CD4-positive, alpha-beta memory T cell (primary cell): ENCODE measurements at regions of chr5 and their contacts with region 1.

Region 1: GRCh38 chr5:138503487-138504270 is 38.4 kb downstream of the EGR1 start:
- DNase-seq: peak; percentile 47 to 57 (median 50)
- H3K4me3 ChIP-seq: no peak overlapping the region
- H3K4me3 Mint-ChIP-seq: no peak overlapping the region
- H3K27ac ChIP-seq: no peak overlapping the region
- H3K27ac Mint-ChIP-seq: peak overlapping the region in 4 of 7 donors; percentile 6 to 83 (median 42)
- H3K4me1 ChIP-seq: no peaks in the 10 kb centered on the region
- H3K4me1 Mint-ChIP-seq: peaks cover 0 to 4% (median 1%) of the 10 kb centered on the region in 4 donors
- H3K27me3 ChIP-seq: no peaks in the 10 kb centered on the region
- H3K27me3 Mint-ChIP-seq: peaks cover 0 to 1% of the 10 kb centered on the region in 2 donors

Region 2: DNA sequence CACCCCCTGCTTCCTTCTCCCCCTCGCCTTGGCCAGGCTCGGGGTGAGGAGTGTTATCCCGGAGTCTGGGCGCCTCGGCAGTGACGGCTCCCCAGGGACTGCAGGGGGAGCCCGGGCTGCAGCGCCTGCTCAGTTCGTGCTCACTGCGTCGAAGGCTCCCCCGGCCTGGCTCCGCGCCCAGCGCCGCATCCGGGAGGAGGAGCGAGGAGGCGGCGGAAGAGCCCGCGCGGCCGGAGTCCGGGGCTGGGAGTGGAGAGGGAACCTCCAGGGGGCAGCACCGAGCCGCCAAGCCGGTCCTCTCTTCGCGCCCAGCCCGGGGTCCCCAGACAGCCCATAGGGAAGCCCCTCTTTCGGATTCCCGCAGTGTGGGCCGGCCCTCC is 39.7 kb before region 1 on chr5:
- CTCF ChIA-PET with region 1: interaction called, 507 read pairs
- POLR2A ChIA-PET with region 1: interaction called, 20 read pairs
- intact Hi-C with region 1: loop called (anchors 1 kb)
- DNase-seq: peak; percentile 91 to 95 (median 94)
- H3K4me3 ChIP-seq: peak overlapping the region; percentile 79 to 85
- H3K4me3 Mint-ChIP-seq: peak overlapping the region; percentile 85 to 97 (median 90)
- H3K27ac ChIP-seq: peak overlapping the region; percentile 90
- H3K27ac Mint-ChIP-seq: peak overlapping the region; percentile 89 to 96 (median 93)
- H3K4me1 ChIP-seq: peaks cover 46% of the 10 kb centered on the region
- H3K4me1 Mint-ChIP-seq: peaks cover 27 to 65% (median 39%) of the 10 kb centered on the region in 4 donors
- H3K27me3 ChIP-seq: no peaks in the 10 kb centered on the region
- H3K27me3 Mint-ChIP-seq: no peaks in the 10 kb centered on the region

Region 3: GRCh38 chr5:138491669-138492559 is 11.8 kb before region 1 on chr5:
- CTCF ChIA-PET with region 1: interaction called, 18 read pairs
- POLR2A ChIA-PET with region 1: interaction called, 4 read pairs
- intact Hi-C with region 1: no loop called
- DNase-seq: peak; percentile 81 to 87 (median 83)
- H3K4me3 ChIP-seq: peak overlapping the region in 1 of 2 donors; percentile 60
- H3K4me3 Mint-ChIP-seq: peak overlapping the region; percentile 84 to 97 (median 92)
- H3K27ac ChIP-seq: peak overlapping the region; percentile 34
- H3K27ac Mint-ChIP-seq: peak overlapping the region in 4 of 7 donors; percentile 71 to 94 (median 79)
- H3K4me1 ChIP-seq: peaks cover 24% of the 10 kb centered on the region
- H3K4me1 Mint-ChIP-seq: peaks cover 7 to 21% (median 12%) of the 10 kb centered on the region in 4 donors
- H3K27me3 ChIP-seq: peaks cover 8% of the 10 kb centered on the region
- H3K27me3 Mint-ChIP-seq: peaks cover 4 to 16% of the 10 kb centered on the region in 2 donors

Region 4: GRCh38 chr5:138515556-138516245 is 12.0 kb after region 1 on chr5:
- CTCF ChIA-PET with region 1: interaction called, 13 read pairs
- POLR2A ChIA-PET with region 1: interaction called, 3 read pairs
- intact Hi-C with region 1: no loop called
- DNase-seq: no peak
- H3K4me3 ChIP-seq: no peak overlapping the region
- H3K4me3 Mint-ChIP-seq: no peak overlapping the region
- H3K27ac ChIP-seq: no peak overlapping the region
- H3K27ac Mint-ChIP-seq: peak overlapping the region in 3 of 7 donors; percentile 10 to 70 (median 50)
- H3K4me1 ChIP-seq: no peaks in the 10 kb centered on the region
- H3K4me1 Mint-ChIP-seq: peaks cover 12 to 13% (median 12%) of the 10 kb centered on the region in 4 donors
- H3K27me3 ChIP-seq: no peaks in the 10 kb centered on the region
- H3K27me3 Mint-ChIP-seq: no peaks in the 10 kb centered on the region

Region 5: GRCh38 chr5:138529801-138530200 is 26.1 kb after region 1 on chr5:
- CTCF ChIA-PET with region 1: interaction called, 17 read pairs
- POLR2A ChIA-PET with region 1: no interaction called
- intact Hi-C with region 1: no loop called
- DNase-seq: no peak
- H3K4me3 ChIP-seq: no peak overlapping the region
- H3K4me3 Mint-ChIP-seq: no peak overlapping the region
- H3K27ac ChIP-seq: no peak overlapping the region
- H3K27ac Mint-ChIP-seq: peak overlapping the region in 2 of 7 donors; percentile 13 to 58
- H3K4me1 ChIP-seq: peaks cover 26% of the 10 kb centered on the region
- H3K4me1 Mint-ChIP-seq: peaks cover 42 to 65% (median 49%) of the 10 kb centered on the region in 4 donors
- H3K27me3 ChIP-seq: no peaks in the 10 kb centered on the region
- H3K27me3 Mint-ChIP-seq: no peaks in the 10 kb centered on the region